Spleen (tissue), 13 donors: ENCODE measurements at regions of chr4 and their contacts with region 1.

Region 1: DNA sequence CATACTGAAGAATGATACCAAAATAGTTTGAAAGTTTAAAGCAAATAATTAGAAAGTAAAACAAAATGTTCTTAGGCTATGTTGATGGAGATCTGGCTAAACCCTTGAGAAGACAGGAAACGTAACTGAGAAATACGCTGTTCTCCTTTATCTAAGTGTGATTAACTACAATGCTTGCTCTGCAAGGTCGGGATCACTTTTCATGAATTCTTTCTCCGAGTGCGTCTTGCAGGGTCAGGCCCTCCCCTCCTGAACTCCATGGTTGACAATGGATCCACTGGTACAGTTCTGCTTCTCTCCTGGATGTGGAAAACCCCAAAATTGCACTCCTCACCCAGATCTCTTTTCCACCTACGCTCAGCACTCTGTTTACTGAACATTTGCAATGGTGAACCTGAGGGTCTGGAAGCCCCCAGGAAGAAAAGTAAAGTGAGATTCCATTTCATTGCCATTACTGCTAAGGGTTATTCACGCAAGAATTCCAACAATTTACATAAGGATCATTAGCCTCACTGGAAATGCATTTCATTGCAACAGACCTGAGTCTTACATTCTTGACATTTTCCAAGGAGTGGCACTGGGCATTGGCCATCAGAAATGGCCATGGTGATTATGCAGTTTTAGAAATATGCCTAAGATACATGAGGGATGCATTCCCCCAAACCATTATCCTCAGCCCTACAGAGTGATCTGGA is 24.6 kb upstream of the WWC2 start:
- DNase-seq: no peak
- H3K4me3 ChIP-seq: no peak overlapping the region
- H3K27ac ChIP-seq: no peak overlapping the region
- H3K4me1 ChIP-seq: peaks cover 0 to 4% (median 0%) of the 10 kb centered on the region in 6 donors
- H3K27me3 ChIP-seq: no peaks in the 10 kb centered on the region
- CTCF ChIP-seq: no peak
- POLR2A ChIP-seq: no peak

Region 2: DNA sequence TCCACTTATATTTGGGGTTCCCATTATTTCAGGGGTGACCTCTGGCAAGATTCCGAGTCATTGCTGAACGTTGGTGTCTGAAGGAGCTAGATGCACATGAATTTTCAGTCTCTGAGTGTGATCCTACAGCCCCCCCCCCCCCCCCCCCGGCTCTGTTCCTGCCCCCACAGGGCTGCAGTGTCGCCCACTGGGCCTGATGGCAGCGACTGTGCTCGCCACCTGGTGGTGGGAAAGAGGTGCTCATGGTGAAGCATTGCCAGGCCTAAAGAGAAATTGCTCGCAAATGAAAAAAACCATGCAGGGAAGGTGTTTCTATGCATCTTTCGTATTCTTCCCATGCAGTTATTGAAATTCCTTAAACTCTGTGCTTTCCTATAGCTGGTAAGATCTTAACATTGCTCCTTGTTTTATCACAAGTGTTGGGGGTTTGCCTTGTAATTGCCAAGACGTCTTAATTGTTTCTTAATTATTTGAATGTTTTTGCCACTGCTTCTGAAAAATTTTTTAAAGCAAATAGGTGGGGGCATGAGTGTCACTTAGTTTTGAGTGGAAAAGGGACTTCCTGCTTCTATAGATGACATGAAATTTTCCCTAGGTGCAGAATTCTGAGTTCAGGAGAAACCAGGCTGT is 182.4 kb after region 1 on chr4:
- intact Hi-C with region 1: loop called (anchors 5 kb)
- DNase-seq: peak; percentile 73
- H3K4me3 ChIP-seq: no peak overlapping the region
- H3K27ac ChIP-seq: no peak overlapping the region
- H3K4me1 ChIP-seq: peaks cover 0 to 10% (median 0%) of the 10 kb centered on the region in 6 donors
- H3K27me3 ChIP-seq: no peaks in the 10 kb centered on the region
- CTCF ChIP-seq: peak in 10 of 11 experiments; percentile 34 to 75 (median 54)
- POLR2A ChIP-seq: no peak